Naive thymus-derived CD4-positive, alpha-beta T cell (primary cell): ENCODE measurements at regions of chr13 and their contacts with region 1.

Region 1: DNA sequence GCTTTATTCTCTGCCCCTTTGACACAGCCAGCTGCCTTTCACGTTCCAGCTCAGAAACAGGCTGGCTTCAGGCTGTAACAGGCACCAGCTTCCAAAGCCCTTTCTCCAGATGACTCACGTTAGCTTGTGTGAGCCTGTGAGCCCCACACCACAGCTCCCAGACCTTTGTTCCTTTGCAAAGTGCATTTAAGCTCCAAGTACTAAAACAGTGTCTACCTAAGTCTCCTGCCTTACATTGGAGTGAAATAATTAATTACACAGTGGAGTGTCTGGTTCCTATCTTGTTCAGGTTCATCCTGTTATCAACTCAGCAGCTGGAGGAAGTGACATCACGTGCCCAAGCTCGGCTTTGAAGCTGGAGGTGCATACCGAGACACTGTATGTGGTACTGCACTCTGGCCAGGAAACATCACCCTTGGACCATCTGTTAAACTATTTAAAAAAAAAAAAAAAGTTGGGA is 475.8 kb downstream of the FOXO1 start:
- DNase-seq: peak in 8 of 9 donors; percentile 36 to 87 (median 80)
- ATAC-seq: peak; percentile 49
- H3K4me3 ChIP-seq: peak overlapping the region; percentile 24
- H3K4me3 Mint-ChIP-seq: peak overlapping the region; percentile 74 to 89 (median 81)
- H3K27ac ChIP-seq: peak overlapping the region; percentile 63
- H3K27ac Mint-ChIP-seq: peak overlapping the region; percentile 96 to 100 (median 97)
- H3K4me1 ChIP-seq: peaks cover 55 to 69% of the 10 kb centered on the region in 2 donors
- H3K4me1 Mint-ChIP-seq: peaks cover 47 to 97% (median 87%) of the 10 kb centered on the region in 7 donors
- H3K27me3 ChIP-seq: no peaks in the 10 kb centered on the region
- H3K27me3 Mint-ChIP-seq: no peaks in the 10 kb centered on the region

Region 2: GRCh38 chr13:40026174-40026585 is 164.5 kb before region 1 on chr13:
- CTCF ChIA-PET with region 1: no interaction called
- POLR2A ChIA-PET with region 1: no interaction called
- intact Hi-C with region 1: loop called in 1 of 2 experiments (anchors 1 kb)
- DNase-seq: peak in 8 of 9 donors; percentile 8 to 63 (median 32)
- ATAC-seq: peak; percentile 77
- H3K4me3 ChIP-seq: peak overlapping the region; percentile 43
- H3K4me3 Mint-ChIP-seq: peak overlapping the region; percentile 39 to 79 (median 68)
- H3K27ac ChIP-seq: no peak overlapping the region
- H3K27ac Mint-ChIP-seq: peak overlapping the region; percentile 24 to 78 (median 44)
- H3K4me1 ChIP-seq: peaks cover 0 to 10% of the 10 kb centered on the region in 2 donors
- H3K4me1 Mint-ChIP-seq: peaks cover 6 to 34% (median 22%) of the 10 kb centered on the region in 7 donors
- H3K27me3 ChIP-seq: no peaks in the 10 kb centered on the region
- H3K27me3 Mint-ChIP-seq: peaks cover 0 to 35% (median 0%) of the 10 kb centered on the region in 5 donors

Region 3: GRCh38 chr13:40149611-40150274 is 40.9 kb before region 1 on chr13:
- CTCF ChIA-PET with region 1: interaction called, 3 read pairs
- POLR2A ChIA-PET with region 1: no interaction called
- intact Hi-C with region 1: loop called (anchors 1 kb)
- DNase-seq: no peak
- ATAC-seq: no peak
- H3K4me3 ChIP-seq: no peak overlapping the region
- H3K4me3 Mint-ChIP-seq: no peak overlapping the region
- H3K27ac ChIP-seq: no peak overlapping the region
- H3K27ac Mint-ChIP-seq: peak overlapping the region in 5 of 9 donors; percentile 13 to 78 (median 53)
- H3K4me1 ChIP-seq: peaks cover 0 to 33% of the 10 kb centered on the region in 2 donors
- H3K4me1 Mint-ChIP-seq: peaks cover 31 to 80% (median 69%) of the 10 kb centered on the region in 7 donors
- H3K27me3 ChIP-seq: no peaks in the 10 kb centered on the region
- H3K27me3 Mint-ChIP-seq: no peaks in the 10 kb centered on the region

Region 4: DNA sequence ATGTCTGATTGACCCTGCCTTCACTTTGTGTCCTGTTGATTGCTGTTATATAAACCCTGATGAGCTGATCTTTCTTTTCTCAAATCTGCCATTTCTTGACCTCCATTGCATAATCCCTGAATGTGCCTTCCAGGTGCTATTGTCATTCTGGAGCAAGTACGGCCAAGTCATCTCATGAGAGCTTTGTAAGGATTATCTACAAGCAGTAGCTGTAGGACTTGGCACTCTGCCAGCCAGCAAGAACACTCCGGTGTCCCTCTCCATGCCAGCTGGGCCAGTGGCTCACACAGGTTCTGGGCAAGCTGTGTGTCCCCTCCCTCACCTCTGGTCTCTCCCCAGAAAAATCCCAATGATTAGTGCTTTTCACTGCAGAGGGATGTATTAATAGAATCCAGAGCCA is 127.7 kb after region 1 on chr13:
- CTCF ChIA-PET with region 1: no interaction called
- POLR2A ChIA-PET with region 1: interaction called, 3 read pairs
- intact Hi-C with region 1: loop called (anchors 1 to 2 kb)
- DNase-seq: no peak
- ATAC-seq: no peak
- H3K4me3 ChIP-seq: no peak overlapping the region
- H3K4me3 Mint-ChIP-seq: peak overlapping the region in 1 of 10 donors; percentile 20
- H3K27ac ChIP-seq: no peak overlapping the region
- H3K27ac Mint-ChIP-seq: peak overlapping the region in 5 of 9 donors; percentile 17 to 85 (median 67)
- H3K4me1 ChIP-seq: peaks cover 5 to 35% of the 10 kb centered on the region in 2 donors
- H3K4me1 Mint-ChIP-seq: peaks cover 39 to 71% (median 68%) of the 10 kb centered on the region in 7 donors
- H3K27me3 ChIP-seq: no peaks in the 10 kb centered on the region
- H3K27me3 Mint-ChIP-seq: no peaks in the 10 kb centered on the region

Region 5: GRCh38 chr13:40485611-40486517 is 295.2 kb after region 1 on chr13:
- CTCF ChIA-PET with region 1: interaction called, 3 read pairs
- POLR2A ChIA-PET with region 1: interaction called, 6 read pairs
- intact Hi-C with region 1: loop called in 1 of 2 experiments (anchors 1 kb)
- DNase-seq: peak; percentile 29 to 93 (median 88)
- ATAC-seq: peak; percentile 97
- H3K4me3 ChIP-seq: peak overlapping the region; percentile 28
- H3K4me3 Mint-ChIP-seq: peak overlapping the region; percentile 67 to 88 (median 78)
- H3K27ac ChIP-seq: peak overlapping the region; percentile 71
- H3K27ac Mint-ChIP-seq: peak overlapping the region; percentile 91 to 100 (median 96)
- H3K4me1 ChIP-seq: peaks cover 45 to 89% of the 10 kb centered on the region in 2 donors
- H3K4me1 Mint-ChIP-seq: peaks cover 61 to 99% (median 90%) of the 10 kb centered on the region in 7 donors
- H3K27me3 ChIP-seq: no peaks in the 10 kb centered on the region
- H3K27me3 Mint-ChIP-seq: no peaks in the 10 kb centered on the region

Region 6: GRCh38 chr13:40770934-40771618 is 580.4 kb after region 1 on chr13 and contains the start of gene MRPS31:
- CTCF ChIA-PET with region 1: no interaction called
- POLR2A ChIA-PET with region 1: interaction called, 3 read pairs
- intact Hi-C with region 1: loop called (anchors 5 kb)
- DNase-seq: peak; percentile 89 to 97 (median 93)
- ATAC-seq: peak; percentile 99
- H3K4me3 ChIP-seq: peak within 1 kb of the TSS; percentile 78
- H3K4me3 Mint-ChIP-seq: peak within 1 kb of the TSS; percentile 94 to 100 (median 99)
- H3K27ac ChIP-seq: peak within 1 kb of the TSS; percentile 89
- H3K27ac Mint-ChIP-seq: peak within 1 kb of the TSS; percentile 93 to 100 (median 98)
- H3K4me1 ChIP-seq: peaks cover 15 to 16% of the 10 kb centered on the region in 2 donors
- H3K4me1 Mint-ChIP-seq: peaks cover 16 to 41% (median 33%) of the 10 kb centered on the region in 7 donors
- H3K27me3 ChIP-seq: no peaks in the 10 kb centered on the region
- H3K27me3 Mint-ChIP-seq: no peaks in the 10 kb centered on the region
- total RNA-seq, gene MRPS31: 15.8 to 39.9 (median 34.7) TPM